ENCODE measurements at regions of chr11 and their contacts with region 1.

Region 1: GRCh38 chr11:132126973-132127899 is 756.8 kb downstream of the NTM start:
- DNase-seq: peak; percentile 16 to 36
- ATAC-seq: peak in 1 of 2 donors; percentile 65
- H3K4me3 ChIP-seq: peak overlapping the region; percentile 32 to 51 (median 39)
- H3K27ac ChIP-seq: peak overlapping the region in 3 of 4 donors; percentile 27 to 43 (median 28)
- H3K4me1 ChIP-seq: peaks cover 0 to 18% of the 10 kb centered on the region in 2 donors
- H3K27me3 ChIP-seq: no peaks in the 10 kb centered on the region
- CTCF ChIP-seq: peak in 2 of 5 experiments; percentile 22 to 29
- POLR2A ChIP-seq: no peak

Region 2: GRCh38 chr11:131644204-131644795 is 482.9 kb before region 1 on chr11:
- in situ Hi-C with region 1: no loop called
- intact Hi-C with region 1: no loop called
- DNase-seq: no peak
- ATAC-seq: no peak
- H3K4me3 ChIP-seq: no peak overlapping the region
- H3K27ac ChIP-seq: no peak overlapping the region
- H3K4me1 ChIP-seq: no peaks in the 10 kb centered on the region
- H3K27me3 ChIP-seq: no peaks in the 10 kb centered on the region
- CTCF ChIP-seq: no peak
- POLR2A ChIP-seq: no peak

Region 3: DNA sequence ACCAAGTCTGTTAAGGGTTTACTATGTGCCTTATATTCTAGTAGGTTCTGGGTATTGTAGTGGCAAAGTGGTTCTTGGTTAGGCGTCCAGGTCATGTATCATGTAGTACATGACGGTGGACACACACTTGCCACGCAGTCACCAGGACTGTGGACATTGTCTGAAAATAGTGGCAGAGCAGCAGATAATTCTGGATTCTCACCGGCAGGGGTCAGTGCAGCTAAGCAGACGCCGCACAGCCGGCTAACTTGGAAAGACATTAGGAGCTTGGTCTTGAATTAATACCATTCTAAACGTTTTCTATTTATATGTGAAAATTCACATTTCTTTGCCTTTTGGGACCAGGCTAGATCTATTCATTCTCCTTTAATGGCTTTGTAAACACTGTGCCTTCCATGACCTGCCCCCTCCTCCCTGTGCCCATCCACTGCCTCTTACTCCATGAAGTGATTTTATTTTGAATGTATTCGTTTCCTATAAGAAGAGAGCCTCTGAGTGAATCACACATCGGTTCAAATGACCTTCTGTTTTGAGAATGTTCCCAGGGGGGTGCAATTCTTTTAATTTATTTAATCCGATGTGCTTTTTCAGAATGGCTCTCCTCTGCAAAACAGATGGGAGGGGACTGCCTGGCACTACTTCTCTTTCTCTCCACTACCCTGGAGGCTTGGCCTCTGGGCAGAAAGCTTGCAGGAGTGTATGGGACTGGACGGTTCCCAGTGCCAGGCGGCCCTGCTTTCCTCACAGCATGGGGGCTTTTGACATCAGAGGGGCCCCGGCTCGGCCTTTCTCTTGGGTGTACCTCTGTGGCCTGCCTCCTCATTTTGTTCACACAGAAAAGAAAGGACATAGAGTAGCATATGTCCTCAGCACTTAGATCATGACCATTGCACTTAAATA is 378.8 kb before region 1 on chr11:
- in situ Hi-C with region 1: loop called in 1 of 4 experiments (anchors 25 kb)
- intact Hi-C with region 1: no loop called
- DNase-seq: peak; percentile 5 to 14
- ATAC-seq: peak in 1 of 2 donors; percentile 39
- H3K4me3 ChIP-seq: no peak overlapping the region
- H3K27ac ChIP-seq: no peak overlapping the region
- H3K4me1 ChIP-seq: no peaks in the 10 kb centered on the region
- H3K27me3 ChIP-seq: no peaks in the 10 kb centered on the region
- CTCF ChIP-seq: peak in 4 of 5 experiments; percentile 20 to 59 (median 42)
- POLR2A ChIP-seq: no peak

Region 4: DNA sequence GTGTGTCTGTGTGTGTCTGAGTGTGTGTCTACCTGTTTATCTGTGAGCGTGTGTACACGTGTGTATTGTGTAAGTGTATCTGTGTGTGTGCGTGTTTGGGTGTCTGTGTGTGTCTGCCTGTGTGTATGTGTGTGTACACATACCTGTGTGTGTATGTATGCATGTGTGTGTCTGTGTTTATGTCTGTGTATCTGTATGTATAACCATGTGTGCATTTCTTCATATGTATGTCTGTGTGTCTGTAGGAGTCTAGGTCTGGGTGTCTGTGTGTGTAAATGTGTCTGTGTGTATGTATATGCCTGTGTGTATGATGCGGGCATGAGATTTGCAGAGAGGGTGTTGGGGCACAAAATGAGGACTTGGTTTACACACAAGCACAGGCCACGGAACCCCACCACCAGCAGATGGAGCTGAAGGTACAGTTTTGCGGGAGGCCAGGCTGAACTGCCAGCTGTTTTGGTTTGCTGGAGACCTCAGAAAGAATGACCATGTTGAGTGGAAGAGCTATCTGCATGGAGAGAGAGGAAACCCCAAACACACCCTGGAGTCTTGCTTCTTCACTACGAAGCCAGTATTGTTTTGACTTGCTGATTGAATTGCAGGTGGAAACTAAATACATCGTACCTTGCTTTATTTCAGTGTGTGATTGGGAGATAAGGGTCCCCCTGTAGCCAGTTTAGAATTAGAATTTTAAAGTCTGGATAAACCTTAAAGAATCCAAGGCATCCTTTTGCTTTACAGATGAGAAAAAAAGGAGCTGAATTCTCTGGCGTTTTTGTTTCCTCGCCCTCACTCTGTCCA is 259.6 kb before region 1 on chr11:
- in situ Hi-C with region 1: loop called in 3 of 4 experiments (anchors 25 kb)
- intact Hi-C with region 1: loop called (anchors 2 kb)
- DNase-seq: peak; percentile 17
- ATAC-seq: no peak
- H3K4me3 ChIP-seq: no peak overlapping the region
- H3K27ac ChIP-seq: no peak overlapping the region
- H3K4me1 ChIP-seq: no peaks in the 10 kb centered on the region
- H3K27me3 ChIP-seq: no peaks in the 10 kb centered on the region
- CTCF ChIP-seq: peak in 3 of 5 experiments; percentile 24 to 42 (median 36)
- POLR2A ChIP-seq: no peak